Gastrocnemius medialis (tissue), 4 donors: ENCODE measurements at regions of chr6 and their contacts with region 1.

Region 1: GRCh38 chr6:6724539-6725467 is 136.3 kb downstream of the LY86 start:
- DNase-seq: peak; percentile 48 to 69
- ATAC-seq: peak; percentile 93 to 94
- H3K4me3 ChIP-seq: peak overlapping the region; percentile 51 to 65 (median 60)
- H3K27ac ChIP-seq: peak overlapping the region; percentile 84 to 90 (median 86)
- H3K4me1 ChIP-seq: peaks cover 18 to 19% of the 10 kb centered on the region in 2 donors
- H3K27me3 ChIP-seq: no peaks in the 10 kb centered on the region
- CTCF ChIP-seq: peak; percentile 66 to 81 (median 74)
- POLR2A ChIP-seq: no peak

Region 2: GRCh38 chr6:6918216-6918983 is 193.6 kb after region 1 on chr6:
- in situ Hi-C with region 1: loop called in 2 of 4 experiments (anchors 25 kb)
- intact Hi-C with region 1: no loop called
- DNase-seq: peak in 1 of 2 donors; percentile 42
- ATAC-seq: peak in 1 of 2 donors; percentile 25
- H3K4me3 ChIP-seq: no peak overlapping the region
- H3K27ac ChIP-seq: peak overlapping the region; percentile 80 to 96 (median 89)
- H3K4me1 ChIP-seq: peaks cover 51 to 64% of the 10 kb centered on the region in 2 donors
- H3K27me3 ChIP-seq: no peaks in the 10 kb centered on the region
- CTCF ChIP-seq: no peak
- POLR2A ChIP-seq: no peak

Region 3: DNA sequence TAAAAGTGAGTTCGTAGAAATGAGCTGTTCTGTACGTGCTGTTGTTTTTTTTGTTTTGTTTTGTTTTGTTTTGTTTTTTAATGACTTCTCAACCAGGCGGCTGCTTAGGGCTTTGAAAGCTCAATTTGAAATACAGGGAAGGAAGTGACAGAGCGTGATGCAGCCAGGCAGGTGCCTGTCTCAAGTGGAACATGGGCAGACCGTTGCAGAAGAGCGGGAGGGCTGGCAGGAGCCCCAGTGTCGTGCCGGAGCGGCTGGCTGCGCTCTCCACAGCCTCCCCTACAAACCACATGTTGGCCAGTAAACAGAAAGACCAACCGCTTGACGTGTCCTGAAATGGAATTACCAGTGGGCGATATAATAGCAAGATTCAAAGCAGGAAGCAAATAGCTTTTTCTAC is 218.0 kb after region 1 on chr6:
- in situ Hi-C with region 1: loop called in 1 of 4 experiments (anchors 25 kb)
- intact Hi-C with region 1: no loop called
- DNase-seq: peak; percentile 85 to 93
- ATAC-seq: peak; percentile 98 to 99
- H3K4me3 ChIP-seq: peak overlapping the region in 3 of 4 donors; percentile 0 to 24 (median 7)
- H3K27ac ChIP-seq: peak overlapping the region; percentile 81 to 91 (median 83)
- H3K4me1 ChIP-seq: peaks cover 13 to 18% of the 10 kb centered on the region in 2 donors
- H3K27me3 ChIP-seq: no peaks in the 10 kb centered on the region
- CTCF ChIP-seq: no peak
- POLR2A ChIP-seq: no peak

Region 4: DNA sequence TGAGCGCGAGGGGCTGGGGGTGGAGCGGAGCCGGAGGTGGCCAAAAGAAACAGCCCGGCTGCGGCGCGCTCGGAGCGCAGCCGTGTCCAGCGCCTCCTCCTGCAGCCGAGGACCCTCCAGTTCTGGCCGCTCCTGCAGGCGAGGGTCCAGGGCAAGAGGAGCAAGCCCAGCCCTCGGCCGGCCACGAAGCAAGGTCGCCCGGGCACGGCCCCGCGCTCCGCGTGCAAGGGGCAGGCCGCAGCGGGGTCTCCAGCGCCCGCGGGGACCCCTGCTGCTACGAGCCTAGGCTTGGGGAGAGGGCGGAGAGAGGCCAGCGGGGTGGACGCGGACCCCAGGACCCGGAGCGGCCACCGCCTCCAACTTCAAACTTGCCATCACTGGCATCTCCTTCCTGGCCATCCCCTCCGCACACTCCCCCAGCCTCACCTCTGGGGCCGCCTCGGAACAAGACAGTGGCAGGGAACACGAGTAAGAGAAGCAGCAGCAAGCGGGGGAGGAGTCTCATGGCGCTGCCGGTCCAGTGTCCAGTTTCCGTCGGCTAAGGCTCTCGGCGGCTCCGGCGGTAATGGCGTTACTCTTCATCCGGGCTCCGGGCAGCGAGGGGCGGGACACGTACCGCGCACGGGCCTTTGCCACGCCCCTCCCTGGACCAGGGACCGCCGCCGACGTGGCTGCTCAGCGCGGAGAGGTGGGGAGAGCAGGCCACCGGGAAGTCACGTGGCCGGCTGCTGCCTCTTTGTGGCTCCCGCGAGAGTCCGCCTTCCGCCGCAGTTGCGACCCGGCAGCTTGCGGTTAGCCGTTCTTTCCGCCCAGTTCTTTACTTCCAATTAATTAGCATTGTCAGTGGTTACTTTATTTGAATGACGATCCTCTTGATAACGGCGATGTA is 588.1 kb after region 1 on chr6 and contains the start of gene SSR1:
- in situ Hi-C with region 1: no loop called
- intact Hi-C with region 1: loop called (anchors 5 kb)
- DNase-seq: peak; percentile 95 to 96
- ATAC-seq: peak; percentile 95 to 97
- H3K4me3 ChIP-seq: peak within 1 kb of the TSS; percentile 83 to 100 (median 96)
- H3K27ac ChIP-seq: peak within 1 kb of the TSS; percentile 85 to 98 (median 96)
- H3K4me1 ChIP-seq: peaks cover 14 to 19% of the 10 kb centered on the region in 2 donors
- H3K27me3 ChIP-seq: no peaks in the 10 kb centered on the region
- CTCF ChIP-seq: no peak
- POLR2A ChIP-seq: peak; percentile 64 to 74
- total RNA-seq, gene SSR1: 11.8 to 36.8 (median 18.6) TPM